ENCODE measurements at regions of chr2 and their contacts with region 1.

Region 1: DNA sequence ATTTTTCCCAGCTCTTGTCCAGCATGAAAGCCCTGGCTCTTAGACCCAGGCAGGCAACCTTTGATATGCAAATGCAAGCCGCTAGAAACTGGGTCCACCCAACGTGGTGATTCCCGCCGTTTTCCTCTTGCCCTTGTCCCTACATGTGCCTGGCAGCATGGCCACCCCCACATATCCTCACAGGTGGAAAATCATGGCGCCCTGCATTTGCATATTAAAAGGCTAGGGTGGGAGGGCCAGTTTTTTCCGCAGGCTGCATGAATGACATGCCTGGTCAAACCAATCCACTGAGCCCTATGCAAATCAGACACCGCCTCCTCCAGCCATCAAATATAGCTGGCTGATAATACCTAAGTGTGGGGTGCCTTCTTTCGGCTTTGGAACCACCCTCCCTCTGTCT is 1091.8 kb upstream of the NXPH2 start:
- DNase-seq: no peak
- ATAC-seq: no peak

Region 2: GRCh38 chr2:138192096-138192495 is 1679.9 kb before region 1 on chr2:
- intact Hi-C with region 1: loop called (anchors 5 kb)
- DNase-seq: no peak
- ATAC-seq: no peak

Measured in sciatic nerve (tissue), 2 donors.